Calu3 (cell line): ENCODE measurements at regions of chr11 and their contacts with region 1.

Region 1: GRCh38 chr11:62560566-62561103 is 13.1 kb downstream of the EEF1G start:
- DNase-seq: peak; percentile 97
- H3K4me3 Mint-ChIP-seq: peak overlapping the region; percentile 16
- H3K27ac Mint-ChIP-seq: peak overlapping the region; percentile 76
- H3K4me1 Mint-ChIP-seq: peaks cover 61% of the 10 kb centered on the region
- H3K27me3 Mint-ChIP-seq: no peaks in the 10 kb centered on the region
- CTCF ChIP-seq: peak; percentile 89

Region 2: GRCh38 chr11:62394825-62395538 is 165.7 kb before region 1 on chr11:
- CTCF ChIA-PET with region 1: interaction called, 15 read pairs
- intact Hi-C with region 1: loop called (anchors 2 kb)
- DNase-seq: peak; percentile 51
- H3K4me3 Mint-ChIP-seq: no peak overlapping the region
- H3K27ac Mint-ChIP-seq: no peak overlapping the region
- H3K4me1 Mint-ChIP-seq: no peaks in the 10 kb centered on the region
- H3K27me3 Mint-ChIP-seq: no peaks in the 10 kb centered on the region
- CTCF ChIP-seq: peak; percentile 70

Region 3: GRCh38 chr11:62427630-62428233 is 132.9 kb before region 1 on chr11:
- CTCF ChIA-PET with region 1: interaction called, 43 read pairs
- intact Hi-C with region 1: loop called (anchors 5 kb)
- DNase-seq: no peak
- H3K4me3 Mint-ChIP-seq: no peak overlapping the region
- H3K27ac Mint-ChIP-seq: no peak overlapping the region
- H3K4me1 Mint-ChIP-seq: peaks cover 41% of the 10 kb centered on the region
- H3K27me3 Mint-ChIP-seq: peaks cover 24% of the 10 kb centered on the region
- CTCF ChIP-seq: no peak

Region 4: GRCh38 chr11:62542750-62543567 is 17.7 kb before region 1 on chr11:
- CTCF ChIA-PET with region 1: interaction called, 86 read pairs
- intact Hi-C with region 1: loop called (anchors 2 kb)
- DNase-seq: peak; percentile 91
- H3K4me3 Mint-ChIP-seq: peak overlapping the region; percentile 100
- H3K27ac Mint-ChIP-seq: peak overlapping the region; percentile 97
- H3K4me1 Mint-ChIP-seq: peaks cover 51% of the 10 kb centered on the region
- H3K27me3 Mint-ChIP-seq: no peaks in the 10 kb centered on the region
- CTCF ChIP-seq: peak; percentile 97

Region 5: GRCh38 chr11:62601394-62602140 is 40.9 kb after region 1 on chr11 and contains the start of gene MTA2:
- CTCF ChIA-PET with region 1: interaction called, 10 read pairs
- intact Hi-C with region 1: no loop called
- DNase-seq: peak; percentile 99
- H3K4me3 Mint-ChIP-seq: peak within 1 kb of the TSS; percentile 88
- H3K27ac Mint-ChIP-seq: peak within 1 kb of the TSS; percentile 78
- H3K4me1 Mint-ChIP-seq: peaks cover 35% of the 10 kb centered on the region
- H3K27me3 Mint-ChIP-seq: no peaks in the 10 kb centered on the region
- CTCF ChIP-seq: no peak
- total RNA-seq, gene MTA2: 90.4 and 97.2 TPM in 2 replicates